Heart left ventricle (tissue), 16 donors: ENCODE measurements at regions of chr10 and their contacts with region 1.

Region 1: DNA sequence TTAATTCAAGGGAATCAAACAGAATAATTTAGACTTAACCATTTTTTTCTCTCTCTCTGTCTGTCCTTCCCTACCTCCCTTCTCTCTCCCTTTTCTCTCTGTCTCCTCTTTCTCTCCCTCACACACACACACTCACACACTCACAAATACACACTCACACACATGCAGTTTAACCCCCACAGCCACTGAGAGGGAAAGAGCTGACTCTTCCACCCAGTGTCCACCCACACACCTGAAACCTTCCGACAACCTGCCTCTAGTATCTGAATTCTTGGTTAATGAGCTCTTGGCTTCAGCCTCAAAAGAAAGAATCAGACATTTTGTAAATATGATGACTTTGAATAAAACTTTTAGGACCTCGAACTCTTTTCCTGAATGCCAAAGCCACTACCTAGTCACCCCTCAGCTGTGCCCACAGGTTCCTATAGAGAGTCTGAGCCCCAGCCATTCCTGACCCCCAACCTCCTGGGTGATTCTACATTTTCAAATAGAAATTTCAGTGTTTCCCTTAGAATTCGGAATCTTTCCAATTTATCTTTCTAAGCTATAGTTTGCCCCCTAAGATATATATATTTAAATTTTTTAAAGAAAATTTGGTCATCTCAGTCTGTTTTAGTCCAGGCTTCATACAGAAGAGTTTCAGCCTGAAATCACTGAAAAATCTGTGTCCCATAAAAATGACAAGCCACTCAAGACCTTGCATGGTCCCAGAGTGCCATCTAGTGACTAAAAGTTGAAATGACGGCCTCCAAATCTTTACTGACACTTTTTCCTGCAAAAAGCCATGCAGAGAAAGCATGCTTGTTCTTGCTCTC is 202.8 kb downstream of the IPMK start:
- DNase-seq: no peak
- ATAC-seq: no peak
- H3K4me3 ChIP-seq: no peak overlapping the region
- H3K27ac ChIP-seq: no peak overlapping the region
- H3K4me1 ChIP-seq: no peaks in the 10 kb centered on the region
- H3K27me3 ChIP-seq: no peaks in the 10 kb centered on the region
- CTCF ChIP-seq: peak; percentile 49 to 82 (median 70)
- POLR2A ChIP-seq: no peak

Region 2: GRCh38 chr10:57338823-57339558 is 725.9 kb before region 1 on chr10:
- intact Hi-C with region 1: loop called (anchors 2 to 10 kb)
- DNase-seq: no peak
- ATAC-seq: no peak
- H3K4me3 ChIP-seq: no peak overlapping the region
- H3K27ac ChIP-seq: no peak overlapping the region
- H3K4me1 ChIP-seq: no peaks in the 10 kb centered on the region
- H3K27me3 ChIP-seq: no peaks in the 10 kb centered on the region
- CTCF ChIP-seq: peak; percentile 49 to 77 (median 62)
- POLR2A ChIP-seq: no peak

Region 3: DNA sequence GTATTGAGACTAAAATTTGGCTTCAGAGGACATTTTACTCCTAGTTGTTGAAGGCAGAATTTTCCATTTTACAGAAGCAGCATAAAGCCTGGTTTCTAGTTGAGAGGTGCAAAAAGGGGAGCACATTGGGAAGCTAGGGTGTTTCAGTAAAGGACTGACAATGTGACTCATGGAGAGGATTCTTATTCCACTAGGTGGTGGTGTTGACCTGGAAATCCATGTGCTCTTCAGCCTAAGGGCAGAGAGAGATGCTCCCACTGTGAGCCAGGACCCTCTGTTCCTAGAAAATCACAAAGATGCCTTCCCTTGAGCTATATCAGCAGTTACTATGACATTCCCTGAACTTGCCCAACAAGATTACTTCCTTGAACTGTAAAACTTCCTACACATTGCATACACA is 485.0 kb before region 1 on chr10:
- intact Hi-C with region 1: loop called (anchors 2 to 10 kb)
- DNase-seq: no peak
- ATAC-seq: peak in 3 of 4 donors; percentile 57 to 67 (median 58)
- H3K4me3 ChIP-seq: no peak overlapping the region
- H3K27ac ChIP-seq: no peak overlapping the region
- H3K4me1 ChIP-seq: no peaks in the 10 kb centered on the region
- H3K27me3 ChIP-seq: no peaks in the 10 kb centered on the region
- CTCF ChIP-seq: peak in 11 of 12 donors; percentile 5 to 56 (median 37)
- POLR2A ChIP-seq: no peak

Region 4: DNA sequence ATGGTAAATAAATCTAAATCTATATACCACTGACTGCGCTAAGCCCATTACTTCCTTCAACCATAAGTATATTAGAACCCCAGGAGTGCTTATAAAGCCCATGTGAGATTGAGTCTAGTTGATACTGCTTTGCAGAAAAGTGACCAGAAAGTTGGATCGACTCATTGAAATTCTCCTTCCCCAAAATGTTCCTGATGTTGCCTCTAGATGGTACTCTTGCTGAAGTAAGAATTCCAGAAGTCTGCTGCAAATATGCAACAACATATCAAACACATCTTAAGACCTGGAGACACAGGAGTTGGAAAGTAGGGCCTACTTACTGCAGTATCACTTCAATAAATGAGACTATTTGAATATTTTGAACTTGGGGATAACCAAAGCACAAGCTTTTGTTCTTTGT is 348.0 kb before region 1 on chr10:
- intact Hi-C with region 1: loop called in 5 of 10 experiments (anchors 5 to 10 kb)
- DNase-seq: no peak
- ATAC-seq: no peak
- H3K4me3 ChIP-seq: no peak overlapping the region
- H3K27ac ChIP-seq: no peak overlapping the region
- H3K4me1 ChIP-seq: peaks cover 0 to 11% (median 0%) of the 10 kb centered on the region in 12 donors
- H3K27me3 ChIP-seq: no peaks in the 10 kb centered on the region
- CTCF ChIP-seq: peak in 10 of 12 donors; percentile 12 to 51 (median 34)
- POLR2A ChIP-seq: no peak

Region 5: GRCh38 chr10:58177362-58177947 is 112.5 kb after region 1 on chr10:
- intact Hi-C with region 1: no loop called
- DNase-seq: no peak
- ATAC-seq: no peak
- H3K4me3 ChIP-seq: no peak overlapping the region
- H3K27ac ChIP-seq: no peak overlapping the region
- H3K4me1 ChIP-seq: no peaks in the 10 kb centered on the region
- H3K27me3 ChIP-seq: no peaks in the 10 kb centered on the region
- CTCF ChIP-seq: peak; percentile 40 to 79 (median 68)
- POLR2A ChIP-seq: no peak